Activated CD4-positive, alpha-beta memory T cell treated with anti-CD3 and anti-CD28 coated beads for 36 hours (primary cell): ENCODE measurements at regions of chr2 and their contacts with region 1.

Region 1: DNA sequence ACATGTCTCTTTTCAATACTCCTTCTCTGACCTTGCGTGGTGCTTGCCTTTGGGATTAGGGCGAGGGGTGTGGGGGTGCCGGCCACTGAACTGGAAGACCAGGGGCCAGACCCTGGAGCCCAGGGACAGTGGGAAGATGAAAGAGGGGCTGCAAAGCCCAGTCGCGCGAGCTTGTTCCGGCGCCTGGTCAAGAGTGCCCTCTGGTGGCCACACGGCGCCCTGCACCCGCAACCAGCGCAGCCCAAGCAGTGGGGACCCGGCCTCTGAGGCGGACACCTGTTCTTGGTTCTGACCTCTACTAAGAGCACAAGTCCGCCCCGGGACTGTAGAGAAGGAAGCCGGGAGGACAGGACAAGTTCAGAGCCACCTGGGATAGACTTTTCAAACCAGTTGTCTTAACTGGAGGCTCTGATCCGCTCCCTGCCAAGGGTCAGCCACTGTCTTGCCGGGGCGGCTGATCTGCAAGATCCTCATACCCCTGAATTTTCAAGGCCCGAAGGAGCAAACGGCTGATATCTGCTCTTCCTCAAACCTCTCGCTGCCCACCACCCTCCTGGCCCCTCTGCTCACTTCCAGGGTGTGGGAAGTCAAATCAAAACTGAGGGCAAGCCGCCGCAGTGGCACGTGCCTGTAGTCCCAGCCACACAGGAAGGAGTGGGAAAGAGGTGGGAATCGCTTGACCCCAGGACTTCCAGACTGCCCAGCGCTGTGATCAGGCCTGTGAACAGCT is 14.9 kb upstream of the MSH6 start:
- DNase-seq: peak; percentile 80
- H3K4me3 Mint-ChIP-seq: no peak overlapping the region
- H3K27ac Mint-ChIP-seq: no peak overlapping the region
- H3K4me1 Mint-ChIP-seq: peaks cover 2% of the 10 kb centered on the region
- H3K27me3 Mint-ChIP-seq: no peaks in the 10 kb centered on the region

Region 2: DNA sequence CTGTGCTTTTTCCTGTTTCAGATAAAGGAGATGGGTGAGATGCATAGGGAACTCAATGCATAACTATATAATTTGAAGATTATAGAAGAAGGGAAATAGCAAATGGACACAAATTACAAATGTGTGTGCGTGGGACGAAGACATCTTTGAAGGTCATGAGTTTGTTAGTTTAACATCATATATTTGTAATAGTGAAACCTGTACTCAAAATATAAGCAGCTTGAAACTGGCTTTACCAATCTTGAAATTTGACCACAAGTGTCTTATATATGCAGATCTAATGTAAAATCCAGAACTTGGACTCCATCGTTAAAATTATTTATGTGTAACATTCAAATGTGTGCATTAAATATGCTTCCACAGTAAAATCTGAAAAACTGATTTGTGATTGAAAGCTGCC is 381.5 kb before region 1 on chr2:
- CTCF ChIA-PET with region 1: interaction called, 27 read pairs
- POLR2A ChIA-PET with region 1: no interaction called
- intact Hi-C with region 1: no loop called
- DNase-seq: no peak
- H3K4me3 Mint-ChIP-seq: no peak overlapping the region
- H3K27ac Mint-ChIP-seq: no peak overlapping the region
- H3K4me1 Mint-ChIP-seq: no peaks in the 10 kb centered on the region
- H3K27me3 Mint-ChIP-seq: peaks cover 10% of the 10 kb centered on the region

Region 3: DNA sequence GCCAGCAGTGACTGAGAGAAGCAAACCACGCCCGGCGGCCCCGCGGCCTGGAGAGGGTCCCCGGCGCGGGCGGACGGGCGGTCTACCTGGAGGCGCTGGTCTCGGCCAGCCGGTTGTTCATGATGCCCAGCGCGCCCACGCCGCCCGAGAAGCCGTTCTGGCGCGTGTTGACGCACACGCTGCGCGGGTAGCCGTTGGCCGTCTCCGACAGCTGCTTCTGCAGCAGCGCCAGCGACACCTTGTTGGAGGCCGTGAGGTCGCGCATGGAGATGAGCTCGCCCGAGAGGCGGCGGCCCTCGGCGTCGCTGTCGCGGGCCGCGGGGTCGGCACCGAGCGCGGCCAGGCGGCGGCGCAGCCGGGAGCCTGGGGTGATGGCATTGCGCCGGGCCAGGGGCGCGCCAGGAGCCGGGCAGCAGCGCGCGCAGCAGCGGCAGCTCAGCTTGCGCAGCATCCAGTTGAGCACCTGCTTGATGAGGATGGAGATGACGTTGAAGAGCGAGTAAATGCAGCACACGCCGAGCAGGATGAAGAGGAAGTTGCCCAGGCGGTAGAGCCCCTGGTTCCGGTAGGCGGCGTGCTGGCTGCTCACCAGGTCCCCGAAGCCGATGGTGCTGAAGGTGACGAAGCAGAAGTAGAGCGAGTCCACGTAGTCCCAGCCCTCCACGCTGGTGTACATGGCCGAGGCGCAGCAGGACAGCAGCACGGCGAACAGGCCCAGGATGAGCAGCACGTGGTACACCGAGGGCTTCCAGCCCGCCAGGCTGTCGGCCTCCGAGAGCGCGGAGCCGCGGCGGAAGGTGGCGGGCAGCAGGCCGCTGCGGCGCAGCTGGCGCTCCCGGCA is 247.0 kb before region 1 on chr2:
- CTCF ChIA-PET with region 1: interaction called, 16 read pairs
- POLR2A ChIA-PET with region 1: interaction called, 3 read pairs
- intact Hi-C with region 1: loop called (anchors 1 kb)
- DNase-seq: peak; percentile 86
- H3K4me3 Mint-ChIP-seq: peak overlapping the region; percentile 78
- H3K27ac Mint-ChIP-seq: peak overlapping the region; percentile 85
- H3K4me1 Mint-ChIP-seq: peaks cover 8% of the 10 kb centered on the region
- H3K27me3 Mint-ChIP-seq: no peaks in the 10 kb centered on the region

Region 4: DNA sequence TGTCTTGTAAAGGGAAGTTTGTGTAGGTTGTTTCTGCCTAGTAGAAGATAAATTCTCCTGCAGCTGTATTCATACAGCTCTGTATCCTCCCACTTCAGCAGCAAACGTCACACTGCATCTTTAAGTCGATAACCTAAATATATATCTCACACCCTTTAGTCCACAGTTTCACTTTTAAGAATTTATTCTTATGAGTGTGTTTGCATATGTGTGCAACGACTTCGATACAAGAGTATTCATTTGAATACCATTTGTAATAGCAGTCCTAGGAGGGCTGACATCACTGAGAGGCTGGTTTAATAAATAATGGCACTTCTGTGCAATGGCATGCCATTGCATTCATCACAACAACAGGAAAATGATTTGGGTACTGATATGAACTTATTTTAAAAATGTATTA is 48.9 kb before region 1 on chr2:
- CTCF ChIA-PET with region 1: interaction called, 10 read pairs
- POLR2A ChIA-PET with region 1: no interaction called
- intact Hi-C with region 1: loop called (anchors 5 kb)
- DNase-seq: no peak
- H3K4me3 Mint-ChIP-seq: no peak overlapping the region
- H3K27ac Mint-ChIP-seq: no peak overlapping the region
- H3K4me1 Mint-ChIP-seq: peaks cover 12% of the 10 kb centered on the region
- H3K27me3 Mint-ChIP-seq: peaks cover 2% of the 10 kb centered on the region

Region 5: DNA sequence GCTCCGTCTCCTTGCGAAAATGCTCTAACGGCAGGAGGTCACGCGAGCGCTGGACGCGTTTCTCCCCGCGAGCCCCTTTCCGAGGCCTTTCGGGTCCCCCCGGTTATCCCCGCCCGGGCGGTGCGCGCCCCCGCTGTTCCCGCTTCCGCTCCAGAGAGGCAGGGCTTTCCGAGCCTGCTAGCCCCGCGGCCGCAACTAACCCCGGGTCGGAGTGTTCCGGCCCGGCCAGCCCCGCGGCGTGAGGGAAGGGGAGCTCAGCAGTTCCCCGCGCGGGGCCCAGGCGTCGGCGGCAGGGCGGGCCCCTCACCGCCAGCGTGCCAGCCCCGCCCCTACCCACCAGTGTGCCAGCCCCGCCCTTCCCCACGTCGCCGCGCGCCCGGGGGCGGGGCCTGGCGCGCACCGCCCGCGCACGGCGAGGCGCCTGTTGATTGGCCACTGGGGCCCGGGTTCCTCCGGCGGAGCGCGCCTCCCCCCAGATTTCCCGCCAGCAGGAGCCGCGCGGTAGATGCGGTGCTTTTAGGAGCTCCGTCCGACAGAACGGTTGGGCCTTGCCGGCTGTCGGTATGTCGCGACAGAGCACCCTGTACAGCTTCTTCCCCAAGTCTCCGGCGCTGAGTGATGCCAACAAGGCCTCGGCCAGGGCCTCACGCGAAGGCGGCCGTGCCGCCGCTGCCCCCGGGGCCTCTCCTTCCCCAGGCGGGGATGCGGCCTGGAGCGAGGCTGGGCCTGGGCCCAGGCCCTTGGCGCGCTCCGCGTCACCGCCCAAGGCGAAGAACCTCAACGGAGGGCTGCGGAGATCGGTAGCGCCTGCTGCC is 14.8 kb after region 1 on chr2 and contains the start of gene MSH6:
- CTCF ChIA-PET with region 1: interaction called, 10 read pairs
- POLR2A ChIA-PET with region 1: interaction called, 4 read pairs
- intact Hi-C with region 1: no loop called
- DNase-seq: peak; percentile 91
- H3K4me3 Mint-ChIP-seq: peak within 1 kb of the TSS; percentile 89
- H3K27ac Mint-ChIP-seq: peak within 1 kb of the TSS; percentile 89
- H3K4me1 Mint-ChIP-seq: peaks cover 22% of the 10 kb centered on the region
- H3K27me3 Mint-ChIP-seq: no peaks in the 10 kb centered on the region
- total RNA-seq, gene MSH6: 131 to 140 TPM